ENCODE measurements at regions of chr7 and their contacts with region 1.

Region 1: GRCh38 chr7:150420987-150421674 is 29.3 kb upstream of the GIMAP8 start:
- DNase-seq: peak; percentile 81 to 85
- H3K4me3 ChIP-seq: no peak overlapping the region
- H3K27ac ChIP-seq: no peak overlapping the region
- H3K4me1 ChIP-seq: no peaks in the 10 kb centered on the region
- H3K27me3 ChIP-seq: no peaks in the 10 kb centered on the region
- CTCF ChIP-seq: peak; percentile 68 to 88 (median 82)
- POLR2A ChIP-seq: no peak

Region 2: GRCh38 chr7:150356265-150356897 is 64.8 kb before region 1 on chr7:
- intact Hi-C with region 1: loop called (anchors 5 kb)
- DNase-seq: no peak
- H3K4me3 ChIP-seq: no peak overlapping the region
- H3K27ac ChIP-seq: no peak overlapping the region
- H3K4me1 ChIP-seq: peaks cover 0 to 4% of the 10 kb centered on the region in 2 donors
- H3K27me3 ChIP-seq: no peaks in the 10 kb centered on the region
- CTCF ChIP-seq: peak; percentile 26 to 75 (median 50)
- POLR2A ChIP-seq: no peak

Region 3: GRCh38 chr7:150860291-150860977 is 439.3 kb after region 1 on chr7:
- intact Hi-C with region 1: no loop called
- DNase-seq: no peak
- H3K4me3 ChIP-seq: no peak overlapping the region
- H3K27ac ChIP-seq: no peak overlapping the region
- H3K4me1 ChIP-seq: no peaks in the 10 kb centered on the region
- H3K27me3 ChIP-seq: no peaks in the 10 kb centered on the region
- CTCF ChIP-seq: no peak
- POLR2A ChIP-seq: no peak

Region 4: GRCh38 chr7:151152643-151153513 is 731.7 kb after region 1 on chr7:
- intact Hi-C with region 1: no loop called
- DNase-seq: no peak
- H3K4me3 ChIP-seq: no peak overlapping the region
- H3K27ac ChIP-seq: no peak overlapping the region
- H3K4me1 ChIP-seq: no peaks in the 10 kb centered on the region
- H3K27me3 ChIP-seq: no peaks in the 10 kb centered on the region
- CTCF ChIP-seq: no peak
- POLR2A ChIP-seq: no peak

Measured in thyroid gland (tissue), 4 donors.